Activated T-helper 1 cell treated with anti-CD3 and anti-CD28 coated beads, Interleukin-12 subunit alpha, Interleukin-12 subunit beta, Interleukin-2, Interleukin-4 antibody, amounts not matched to agents 30 ng/mL and 10 ng/mL and 1 ng/mL, durations not matched to agents 14 hours and 24 hours and 36 hours (primary cell): ENCODE measurements at regions of chr22 and their contacts with region 1.

Region 1: DNA sequence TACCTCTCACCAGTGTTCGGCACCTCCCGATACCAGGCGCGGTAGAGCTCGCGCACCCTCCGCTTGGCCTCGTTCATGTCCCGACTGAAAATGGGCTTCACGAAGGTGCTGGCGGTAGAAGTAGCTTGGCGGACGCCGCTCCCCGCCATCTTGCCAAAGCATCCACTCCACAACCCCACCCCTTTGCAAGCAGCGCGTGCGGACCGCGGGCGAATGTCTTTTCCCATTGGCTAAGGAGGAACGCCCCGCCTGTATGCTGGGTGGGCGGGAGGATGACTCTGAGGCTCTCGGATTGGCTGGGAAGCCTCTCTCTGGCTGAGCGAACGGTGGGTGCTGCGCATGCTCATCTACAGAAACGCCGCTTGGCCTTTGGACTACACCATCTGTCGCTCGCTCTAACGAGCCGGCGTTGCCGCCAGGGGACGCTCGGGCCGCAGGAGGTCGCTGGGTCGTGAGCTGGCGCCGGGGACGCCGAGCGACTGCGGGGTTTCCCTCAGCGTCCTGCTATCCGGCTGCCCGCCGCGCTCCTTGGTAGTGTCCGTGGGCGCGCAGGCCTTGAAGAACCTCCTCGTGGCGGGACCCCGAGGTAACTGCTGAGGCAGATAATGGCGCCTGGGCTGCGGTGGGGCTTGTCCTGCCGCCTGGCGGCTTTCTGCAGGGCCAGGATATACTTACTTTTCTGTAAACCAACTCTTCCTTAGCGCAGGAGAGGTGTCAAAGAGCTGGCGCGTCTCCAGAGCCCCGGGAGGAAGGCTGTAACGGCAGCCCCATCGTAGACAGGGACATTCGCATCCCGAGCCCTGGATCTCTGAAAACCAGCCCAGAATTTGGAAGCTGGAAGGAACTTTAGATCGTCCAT is at the start of gene NDUFA6:
- DNase-seq: peak; percentile 99
- H3K4me3 Mint-ChIP-seq: peak within 1 kb of the TSS; percentile 98
- H3K27ac Mint-ChIP-seq: peak within 1 kb of the TSS; percentile 99
- H3K4me1 Mint-ChIP-seq: peaks cover 29% of the 10 kb centered on the region
- H3K27me3 Mint-ChIP-seq: no peaks in the 10 kb centered on the region
- total RNA-seq, gene NDUFA6: 81.6 and 85.8 TPM in 2 replicates

Region 2: DNA sequence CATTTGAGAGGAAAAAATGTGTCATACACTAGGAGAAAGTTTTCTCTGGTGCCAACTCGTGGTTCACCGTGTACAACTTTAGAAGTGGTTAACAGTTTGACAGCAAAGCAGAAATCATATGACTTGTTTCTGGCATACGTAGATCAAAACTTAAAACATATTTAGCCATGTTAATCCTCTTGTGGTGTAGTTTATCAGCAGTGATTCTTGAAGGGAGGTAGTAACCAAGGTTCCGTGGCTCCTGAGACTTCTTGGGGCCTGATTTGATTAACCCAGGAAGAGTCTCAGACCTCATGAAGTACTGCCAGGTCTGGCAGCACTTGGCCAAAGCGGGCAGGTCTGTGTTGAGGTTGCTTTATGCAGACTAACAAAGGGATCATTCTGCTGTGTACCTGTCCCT is 217.4 kb before region 1 on chr22:
- intact Hi-C with region 1: no loop called
- DNase-seq: peak; percentile 10
- H3K4me3 Mint-ChIP-seq: peak overlapping the region; percentile 76
- H3K27ac Mint-ChIP-seq: peak overlapping the region; percentile 82
- H3K4me1 Mint-ChIP-seq: peaks cover 67% of the 10 kb centered on the region
- H3K27me3 Mint-ChIP-seq: no peaks in the 10 kb centered on the region

Region 3: GRCh38 chr22:41966607-41967240 is 124.1 kb before region 1 on chr22:
- intact Hi-C with region 1: loop called (anchors 1 kb)
- DNase-seq: peak; percentile 37
- H3K4me3 Mint-ChIP-seq: no peak overlapping the region
- H3K27ac Mint-ChIP-seq: no peak overlapping the region
- H3K4me1 Mint-ChIP-seq: peaks cover 8% of the 10 kb centered on the region
- H3K27me3 Mint-ChIP-seq: no peaks in the 10 kb centered on the region

Region 4: DNA sequence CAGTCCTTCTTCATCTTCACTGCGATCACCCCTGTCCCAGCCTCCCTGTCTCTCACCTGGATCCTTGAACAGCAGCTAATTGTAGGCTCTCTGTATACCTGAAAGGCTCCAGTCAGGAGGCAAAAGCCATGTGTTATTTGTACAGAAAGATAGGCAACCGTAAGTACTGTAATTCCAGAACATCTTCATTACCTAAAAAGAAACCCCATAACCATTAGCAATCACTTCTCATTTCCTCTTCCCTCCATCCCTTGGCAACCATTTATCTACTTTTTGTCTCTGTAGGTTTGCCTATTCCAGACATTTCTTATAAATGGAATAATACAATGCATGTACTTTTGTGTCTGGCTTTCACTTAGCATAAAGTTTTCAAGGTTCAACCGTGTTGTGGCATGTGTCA is 38.1 kb before region 1 on chr22:
- intact Hi-C with region 1: no loop called
- DNase-seq: no peak
- H3K4me3 Mint-ChIP-seq: no peak overlapping the region
- H3K27ac Mint-ChIP-seq: no peak overlapping the region
- H3K4me1 Mint-ChIP-seq: peaks cover 4% of the 10 kb centered on the region
- H3K27me3 Mint-ChIP-seq: no peaks in the 10 kb centered on the region

Region 5: DNA sequence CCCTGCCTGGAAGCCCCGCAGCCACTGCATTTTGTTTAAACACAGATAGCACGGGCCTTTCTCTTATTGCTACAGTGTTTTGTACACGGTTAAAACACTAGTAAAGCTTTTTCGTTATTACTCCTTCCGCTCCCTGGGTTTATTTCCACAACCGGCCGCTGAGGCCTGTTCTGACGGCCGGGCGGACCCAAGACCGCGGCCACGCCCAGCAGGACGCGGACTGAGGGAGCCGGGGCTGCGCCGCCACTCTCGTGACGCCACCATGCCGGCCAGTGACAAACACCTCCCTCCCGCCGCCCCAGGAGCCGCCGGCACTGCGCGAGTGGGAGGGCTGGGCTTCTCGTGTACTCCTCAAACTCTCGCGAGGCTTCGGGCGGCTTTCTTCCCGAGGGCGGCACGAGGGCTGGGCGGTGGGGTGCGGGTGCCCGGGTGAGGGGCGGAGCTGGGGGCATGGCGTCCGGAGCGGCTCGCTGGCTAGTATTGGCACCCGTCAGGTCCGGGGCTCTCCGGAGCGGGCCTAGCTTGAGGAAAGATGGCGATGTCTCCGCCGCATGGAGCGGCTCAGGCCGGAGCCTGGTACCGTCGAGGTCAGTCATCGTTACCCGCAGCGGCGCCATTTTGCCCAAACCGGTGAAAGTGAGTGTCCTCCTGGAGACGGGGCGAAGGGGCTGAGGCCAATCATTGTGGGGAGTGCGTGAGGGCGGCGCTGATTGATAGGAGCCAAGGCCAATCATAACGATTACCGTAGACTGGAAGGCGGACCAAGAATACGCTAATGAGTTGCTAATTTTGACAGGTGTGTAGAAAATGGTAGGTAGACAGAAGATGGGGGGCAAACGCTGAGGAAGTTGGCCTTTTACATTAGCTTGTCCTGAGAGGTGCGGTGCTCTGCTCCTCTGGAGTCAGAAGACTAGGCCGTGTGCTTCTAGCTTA is 11.2 kb before region 1 on chr22 and contains the start of gene SMDT1:
- intact Hi-C with region 1: loop called (anchors 1 kb)
- DNase-seq: peak; percentile 98
- H3K4me3 Mint-ChIP-seq: peak within 1 kb of the TSS; percentile 89
- H3K27ac Mint-ChIP-seq: peak within 1 kb of the TSS; percentile 92
- H3K4me1 Mint-ChIP-seq: peaks cover 34% of the 10 kb centered on the region
- H3K27me3 Mint-ChIP-seq: no peaks in the 10 kb centered on the region
- total RNA-seq, gene SMDT1: 53.9 and 58.2 TPM in 2 replicates

Region 6: DNA sequence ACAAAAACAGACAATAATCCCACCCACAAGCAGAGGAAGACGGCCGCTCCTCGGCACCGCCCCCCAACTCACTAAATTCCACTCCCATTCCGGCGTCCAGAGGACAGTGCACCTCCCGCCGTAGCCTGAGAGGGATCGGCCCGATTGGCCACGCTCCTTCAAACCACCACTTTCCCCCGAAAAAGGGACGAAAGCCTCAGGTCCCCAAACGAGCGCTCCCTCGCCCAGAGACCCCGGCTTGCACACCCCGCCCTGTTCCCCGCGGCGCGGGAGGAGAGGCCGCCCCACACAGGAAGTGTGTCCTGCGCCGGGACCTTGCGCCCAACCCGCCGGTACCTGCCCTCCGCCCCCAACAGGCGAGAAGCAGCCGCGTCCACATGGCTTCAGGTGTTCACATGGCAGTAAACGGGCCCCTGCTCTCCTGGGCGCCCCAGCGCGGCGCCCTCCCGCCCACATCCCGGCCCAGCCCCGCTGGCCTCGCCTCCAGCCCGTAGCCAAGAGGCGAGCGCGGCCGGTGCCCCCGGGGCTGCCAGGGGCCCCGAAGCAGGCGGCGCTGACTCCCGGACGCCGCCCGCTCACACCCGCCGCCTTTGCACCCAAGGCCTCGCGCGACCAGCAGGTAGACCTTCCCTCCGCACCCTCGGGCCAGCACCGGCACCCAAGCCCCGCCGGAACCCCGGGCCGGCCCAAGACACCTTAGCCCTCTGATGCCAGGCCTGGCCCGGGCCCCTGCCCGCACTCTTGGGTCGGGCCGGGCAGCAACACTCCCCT is 178.8 kb after region 1 on chr22:
- intact Hi-C with region 1: loop called (anchors 1 kb)
- DNase-seq: peak; percentile 67
- H3K4me3 Mint-ChIP-seq: peak overlapping the region; percentile 90
- H3K27ac Mint-ChIP-seq: peak overlapping the region; percentile 87
- H3K4me1 Mint-ChIP-seq: peaks cover 37% of the 10 kb centered on the region
- H3K27me3 Mint-ChIP-seq: no peaks in the 10 kb centered on the region

Region 7: GRCh38 chr22:42353883-42354727 is 263.3 kb after region 1 on chr22:
- intact Hi-C with region 1: no loop called
- DNase-seq: no peak
- H3K4me3 Mint-ChIP-seq: no peak overlapping the region
- H3K27ac Mint-ChIP-seq: no peak overlapping the region
- H3K4me1 Mint-ChIP-seq: no peaks in the 10 kb centered on the region
- H3K27me3 Mint-ChIP-seq: peaks cover 3% of the 10 kb centered on the region

Region 8: GRCh38 chr22:42437488-42438292 is 346.9 kb after region 1 on chr22:
- intact Hi-C with region 1: loop called (anchors 1 kb)
- DNase-seq: peak; percentile 76
- H3K4me3 Mint-ChIP-seq: peak overlapping the region; percentile 83
- H3K27ac Mint-ChIP-seq: peak overlapping the region; percentile 73
- H3K4me1 Mint-ChIP-seq: peaks cover 21% of the 10 kb centered on the region
- H3K27me3 Mint-ChIP-seq: peaks cover 8% of the 10 kb centered on the region